Motor neuron (in vitro differentiated cells): ENCODE measurements at regions of chr12 and their contacts with region 1.

Region 1: GRCh38 chr12:104286538-104287482 is 16.7 kb upstream of the EID3 start:
- ATAC-seq: peak; percentile 79 to 92 (median 88)
- H3K4me3 ChIP-seq: peak overlapping the region; percentile 65 to 82 (median 76)
- H3K27ac ChIP-seq: peak overlapping the region; percentile 87 to 93
- H3K4me1 ChIP-seq: peaks cover 8 to 9% of the 10 kb centered on the region in 2 donors

Region 2: DNA sequence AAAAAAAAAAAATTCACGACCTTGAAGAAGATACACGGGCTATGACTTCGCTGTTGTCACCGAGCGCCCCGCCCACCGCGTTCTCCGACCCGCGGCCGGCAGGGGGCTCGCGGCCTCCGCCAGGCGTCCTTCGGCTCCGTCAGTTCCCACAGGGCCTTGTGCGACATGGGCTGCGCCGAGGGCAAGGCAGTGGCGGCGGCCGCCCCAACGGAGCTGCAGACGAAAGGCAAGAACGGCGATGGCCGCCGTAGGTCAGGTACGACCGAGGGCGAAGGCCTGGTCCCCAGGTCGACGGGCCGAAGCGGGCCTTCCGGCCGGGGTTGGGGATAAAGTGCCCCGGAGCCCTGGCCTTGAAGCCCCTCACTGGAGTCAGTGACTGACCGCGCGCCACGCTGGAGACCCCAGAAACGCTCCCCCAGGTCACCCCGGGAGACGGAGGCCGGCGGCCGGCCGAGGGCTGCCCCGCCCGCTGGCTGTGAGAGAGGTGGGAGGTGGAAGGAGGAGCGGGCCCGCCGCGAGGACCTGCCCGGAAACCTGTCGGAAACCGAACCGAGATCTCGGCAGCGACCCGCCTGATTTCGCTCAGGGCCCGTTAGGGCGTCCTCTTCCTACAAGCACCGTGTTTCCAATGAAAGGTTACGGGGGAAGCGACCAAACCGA is 71.0 kb before region 1 on chr12 and contains the start of gene TXNRD1:
- in situ Hi-C with region 1: loop called in 1 of 9 experiments (anchors 10 kb)
- ATAC-seq: peak; percentile 34 to 98 (median 93)
- H3K4me3 ChIP-seq: peak within 1 kb of the TSS; percentile 23 to 41 (median 27)
- H3K27ac ChIP-seq: no peak within 1 kb of the TSS
- H3K4me1 ChIP-seq: no peaks in the 10 kb centered on the region
- total RNA-seq, gene TXNRD1: 42.8 to 219 (median 87.5) TPM

Region 3: DNA sequence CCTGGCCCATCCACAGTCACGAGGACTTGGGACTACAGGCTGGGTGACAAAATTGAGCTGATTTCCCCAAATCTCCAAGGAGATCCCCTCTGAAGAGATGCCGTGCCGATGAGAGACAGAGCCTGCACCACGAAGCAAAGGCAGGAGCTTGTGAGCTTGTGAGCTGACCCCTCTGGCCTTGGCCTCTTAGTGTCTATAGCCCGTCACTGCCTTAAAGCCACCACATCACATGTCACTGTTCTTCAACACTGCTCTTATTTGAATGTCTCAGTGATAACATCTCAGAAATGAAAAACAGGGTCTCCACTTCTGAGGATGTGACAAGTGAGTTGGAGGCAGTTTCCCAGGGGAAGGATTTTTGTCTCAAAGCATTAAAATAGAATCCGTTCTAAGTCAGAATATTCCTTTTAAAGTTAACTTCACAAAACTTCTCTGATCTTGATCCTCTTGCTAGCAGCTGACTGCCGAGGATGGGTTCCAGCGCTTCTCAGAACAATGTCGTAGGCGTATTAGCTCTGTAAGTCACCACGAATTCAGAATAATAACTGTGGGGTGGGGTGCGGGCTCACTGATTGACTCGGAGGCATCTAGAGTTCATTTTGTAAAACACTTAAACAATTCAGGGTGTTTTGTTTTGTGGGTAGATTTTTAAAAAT is 207.5 kb after region 1 on chr12:
- in situ Hi-C with region 1: no loop called
- ATAC-seq: peak in 3 of 8 experiments; percentile 80 to 91 (median 81)
- H3K4me3 ChIP-seq: no peak overlapping the region
- H3K27ac ChIP-seq: no peak overlapping the region
- H3K4me1 ChIP-seq: peaks cover 8 to 15% of the 10 kb centered on the region in 2 donors

Region 4: GRCh38 chr12:104546575-104546974 is 259.8 kb after region 1 on chr12:
- in situ Hi-C with region 1: no loop called
- ATAC-seq: no peak
- H3K4me3 ChIP-seq: no peak overlapping the region
- H3K27ac ChIP-seq: no peak overlapping the region
- H3K4me1 ChIP-seq: peaks cover 14 to 16% of the 10 kb centered on the region in 2 donors